ENCODE measurements at regions of chr20 and their contacts with region 1.

Region 1: DNA sequence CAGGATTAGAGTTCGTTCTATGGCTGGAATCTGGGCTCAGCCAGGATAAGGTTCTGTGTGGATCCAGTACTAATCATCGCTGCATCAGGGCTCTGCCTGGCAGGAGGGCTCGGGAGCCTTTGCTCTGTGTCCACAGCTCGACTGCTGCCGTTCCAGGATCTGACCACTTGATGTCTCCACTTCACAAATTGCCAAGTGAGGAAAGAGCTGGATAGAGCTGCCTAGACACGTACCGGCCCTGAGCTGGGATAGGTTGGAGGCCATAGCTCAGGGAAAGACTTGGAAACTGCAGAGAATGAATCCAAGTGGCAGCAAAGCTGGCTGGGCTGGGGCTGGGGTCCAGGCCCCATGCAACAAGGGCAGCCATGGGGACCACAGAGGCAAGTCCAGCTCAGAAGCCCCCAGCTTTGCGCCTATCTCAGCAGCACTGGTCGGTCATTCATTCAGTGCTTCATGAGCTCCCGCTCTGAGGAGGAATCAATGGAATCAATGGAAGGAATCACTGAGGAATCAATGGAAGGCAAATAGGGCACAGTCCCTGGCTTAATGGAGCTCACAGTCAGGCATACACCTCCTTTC is 38.0 kb upstream of the TOP1 start:
- DNase-seq: peak; percentile 91
- H3K4me3 Mint-ChIP-seq: no peak overlapping the region
- H3K27ac Mint-ChIP-seq: peak overlapping the region; percentile 88
- H3K4me1 Mint-ChIP-seq: peaks cover 15% of the 10 kb centered on the region
- H3K27me3 Mint-ChIP-seq: no peaks in the 10 kb centered on the region
- CTCF ChIP-seq: peak; percentile 71

Region 2: DNA sequence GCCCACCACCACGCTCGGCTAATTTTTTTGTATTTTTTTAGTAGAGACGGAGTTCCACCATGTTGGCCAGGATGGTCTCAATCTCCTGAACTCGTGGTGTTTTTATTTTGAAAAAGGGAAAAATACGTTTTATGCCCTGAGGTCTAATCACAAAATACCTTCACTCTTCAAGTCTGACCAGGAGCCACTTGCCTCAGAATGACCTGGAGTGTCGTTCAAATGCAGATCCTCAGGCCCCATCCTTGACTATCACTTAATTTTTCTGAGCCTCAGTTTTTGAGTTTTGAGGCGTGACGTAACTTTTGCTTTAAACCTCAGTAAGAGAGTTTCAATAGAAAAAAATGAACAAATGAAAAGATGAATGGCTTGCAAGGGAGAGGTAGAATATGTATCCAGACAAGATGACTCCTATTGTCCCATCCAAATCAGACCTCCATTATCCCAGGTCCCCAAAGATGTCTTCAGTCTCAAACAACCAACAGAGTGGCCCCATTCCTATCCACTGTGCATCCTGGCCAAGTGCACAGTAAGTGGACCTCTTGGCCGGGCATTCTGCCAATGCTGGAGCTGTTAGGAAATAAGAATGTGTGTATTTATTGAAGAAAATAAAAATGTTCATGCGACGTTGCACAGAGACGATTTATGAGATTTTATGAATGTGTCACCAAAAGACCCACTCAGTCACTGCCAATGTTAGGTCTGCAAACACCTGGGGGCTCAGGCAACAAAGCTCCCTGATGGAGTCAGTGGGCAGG is 497.7 kb before region 1 on chr20:
- CTCF ChIA-PET with region 1: no interaction called
- POLR2A ChIA-PET with region 1: no interaction called
- intact Hi-C with region 1: no loop called
- DNase-seq: peak; percentile 93
- H3K4me3 Mint-ChIP-seq: peak overlapping the region; percentile 47
- H3K27ac Mint-ChIP-seq: peak overlapping the region; percentile 72
- H3K4me1 Mint-ChIP-seq: peaks cover 59% of the 10 kb centered on the region
- H3K27me3 Mint-ChIP-seq: no peaks in the 10 kb centered on the region
- CTCF ChIP-seq: no peak

Region 3: DNA sequence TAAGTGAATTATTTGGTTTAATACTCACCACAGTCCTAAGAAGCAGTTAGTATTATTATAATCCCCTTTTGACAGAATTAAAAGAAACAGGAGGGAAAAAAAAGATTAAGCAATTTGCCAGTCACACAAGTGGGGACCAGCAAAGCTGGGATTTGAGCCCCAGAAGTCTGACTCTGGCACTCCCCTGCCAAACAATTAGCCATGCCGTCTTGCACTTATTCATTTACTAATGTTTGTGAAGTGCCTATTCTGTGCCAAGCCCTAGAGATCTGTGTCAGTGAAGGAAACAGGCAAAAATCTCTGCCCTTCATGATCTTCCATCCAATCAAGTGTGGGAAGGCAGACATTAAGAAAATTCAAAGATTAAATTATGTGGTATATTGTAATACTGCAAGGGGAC is 88.0 kb before region 1 on chr20:
- CTCF ChIA-PET with region 1: no interaction called
- POLR2A ChIA-PET with region 1: no interaction called
- intact Hi-C with region 1: no loop called
- DNase-seq: no peak
- H3K4me3 Mint-ChIP-seq: no peak overlapping the region
- H3K27ac Mint-ChIP-seq: no peak overlapping the region
- H3K4me1 Mint-ChIP-seq: no peaks in the 10 kb centered on the region
- H3K27me3 Mint-ChIP-seq: no peaks in the 10 kb centered on the region
- CTCF ChIP-seq: no peak

Region 4: DNA sequence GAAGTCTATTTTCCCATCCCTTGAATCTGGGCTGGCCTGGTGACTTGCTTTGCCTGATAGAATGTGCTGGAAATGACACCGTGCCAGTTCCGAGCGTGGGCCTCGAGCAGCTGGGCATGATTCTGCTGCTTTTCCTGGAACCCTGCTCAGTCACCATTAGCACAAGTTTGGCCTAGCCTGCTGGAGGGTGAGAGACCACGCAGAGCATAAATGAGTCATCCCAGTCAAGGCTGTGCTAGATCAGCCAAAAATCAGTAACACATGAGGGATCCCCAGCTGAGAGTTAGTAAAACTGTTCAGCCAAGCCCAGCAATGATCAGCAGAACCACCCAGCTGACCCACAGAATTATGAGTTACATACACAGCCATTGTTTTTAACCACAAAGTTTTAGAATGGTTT is 36.8 kb before region 1 on chr20:
- CTCF ChIA-PET with region 1: no interaction called
- POLR2A ChIA-PET with region 1: no interaction called
- intact Hi-C with region 1: no loop called
- DNase-seq: no peak
- H3K4me3 Mint-ChIP-seq: no peak overlapping the region
- H3K27ac Mint-ChIP-seq: no peak overlapping the region
- H3K4me1 Mint-ChIP-seq: no peaks in the 10 kb centered on the region
- H3K27me3 Mint-ChIP-seq: no peaks in the 10 kb centered on the region
- CTCF ChIP-seq: no peak

Region 5: DNA sequence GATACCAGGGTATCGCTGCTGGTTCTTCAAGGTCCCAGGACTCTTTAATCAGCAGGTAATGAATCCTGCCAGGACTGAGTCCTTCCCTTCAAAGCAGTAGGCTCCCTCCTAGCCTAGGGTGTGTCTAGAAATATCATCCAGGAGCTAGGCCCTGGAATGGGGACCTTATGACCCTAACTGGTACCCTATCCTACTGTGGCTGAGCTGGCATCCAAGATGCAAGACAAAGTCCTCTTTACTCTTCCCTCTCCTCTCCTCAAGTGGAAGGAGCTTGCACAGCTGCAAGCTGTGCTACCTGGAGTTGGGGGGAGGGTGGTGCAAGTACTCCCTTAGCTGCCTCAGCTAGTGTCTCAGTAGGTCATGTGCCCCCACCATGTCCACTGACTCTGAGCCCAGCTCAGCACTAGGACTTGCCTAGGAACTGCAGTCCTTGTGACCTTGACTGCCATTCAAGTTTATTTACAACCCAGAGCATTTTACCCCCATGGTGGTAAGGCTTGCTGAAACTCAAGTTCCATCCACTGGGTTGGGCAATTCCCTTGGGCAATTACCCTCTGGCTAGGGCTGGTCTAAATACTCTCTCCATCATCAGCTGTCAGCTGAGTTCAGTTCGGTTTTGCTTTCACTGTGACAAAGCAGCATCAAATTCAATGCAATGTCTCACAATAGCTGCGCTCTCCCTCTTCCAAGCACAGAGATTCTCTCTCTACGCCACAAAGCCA is 10.4 kb before region 1 on chr20:
- CTCF ChIA-PET with region 1: interaction called, 81 read pairs
- POLR2A ChIA-PET with region 1: interaction called, 5 read pairs
- intact Hi-C with region 1: no loop called
- DNase-seq: no peak
- H3K4me3 Mint-ChIP-seq: no peak overlapping the region
- H3K27ac Mint-ChIP-seq: peak overlapping the region; percentile 7
- H3K4me1 Mint-ChIP-seq: peaks cover 16% of the 10 kb centered on the region
- H3K27me3 Mint-ChIP-seq: no peaks in the 10 kb centered on the region
- CTCF ChIP-seq: no peak

Region 6: GRCh38 chr20:41017390-41018042 is 26.9 kb after region 1 on chr20:
- CTCF ChIA-PET with region 1: interaction called, 18 read pairs
- POLR2A ChIA-PET with region 1: interaction called, 3 read pairs
- intact Hi-C with region 1: no loop called
- DNase-seq: no peak
- H3K4me3 Mint-ChIP-seq: no peak overlapping the region
- H3K27ac Mint-ChIP-seq: no peak overlapping the region
- H3K4me1 Mint-ChIP-seq: peaks cover 18% of the 10 kb centered on the region
- H3K27me3 Mint-ChIP-seq: no peaks in the 10 kb centered on the region
- CTCF ChIP-seq: no peak

Region 7: DNA sequence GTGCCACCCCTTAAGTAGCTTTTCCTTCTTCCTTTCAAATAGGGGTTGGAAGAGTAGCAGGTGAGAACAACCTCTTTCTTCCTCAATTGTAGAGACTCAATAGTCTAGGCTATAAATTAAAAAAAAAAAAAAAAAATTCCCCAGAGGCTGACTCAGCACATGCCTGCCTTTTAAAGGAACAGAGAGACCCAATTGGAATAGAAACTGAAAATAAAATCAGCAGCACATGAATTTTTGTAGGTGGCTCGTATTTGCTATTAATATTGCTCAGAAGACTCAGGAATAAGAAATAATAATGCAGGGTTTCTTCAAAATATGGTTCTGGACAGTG is 57.3 kb after region 1 on chr20:
- CTCF ChIA-PET with region 1: interaction called, 88 read pairs
- POLR2A ChIA-PET with region 1: interaction called, 16 read pairs
- intact Hi-C with region 1: loop called (anchors 5 kb)
- DNase-seq: peak; percentile 39
- H3K4me3 Mint-ChIP-seq: peak overlapping the region; percentile 73
- H3K27ac Mint-ChIP-seq: peak overlapping the region; percentile 5
- H3K4me1 Mint-ChIP-seq: peaks cover 66% of the 10 kb centered on the region
- H3K27me3 Mint-ChIP-seq: no peaks in the 10 kb centered on the region
- CTCF ChIP-seq: no peak

Region 8: GRCh38 chr20:41072190-41072863 is 81.7 kb after region 1 on chr20:
- CTCF ChIA-PET with region 1: interaction called, 248 read pairs
- POLR2A ChIA-PET with region 1: interaction called, 4 read pairs
- intact Hi-C with region 1: no loop called
- DNase-seq: peak; percentile 82
- H3K4me3 Mint-ChIP-seq: no peak overlapping the region
- H3K27ac Mint-ChIP-seq: peak overlapping the region; percentile 43
- H3K4me1 Mint-ChIP-seq: peaks cover 27% of the 10 kb centered on the region
- H3K27me3 Mint-ChIP-seq: no peaks in the 10 kb centered on the region
- CTCF ChIP-seq: no peak

Region 9: DNA sequence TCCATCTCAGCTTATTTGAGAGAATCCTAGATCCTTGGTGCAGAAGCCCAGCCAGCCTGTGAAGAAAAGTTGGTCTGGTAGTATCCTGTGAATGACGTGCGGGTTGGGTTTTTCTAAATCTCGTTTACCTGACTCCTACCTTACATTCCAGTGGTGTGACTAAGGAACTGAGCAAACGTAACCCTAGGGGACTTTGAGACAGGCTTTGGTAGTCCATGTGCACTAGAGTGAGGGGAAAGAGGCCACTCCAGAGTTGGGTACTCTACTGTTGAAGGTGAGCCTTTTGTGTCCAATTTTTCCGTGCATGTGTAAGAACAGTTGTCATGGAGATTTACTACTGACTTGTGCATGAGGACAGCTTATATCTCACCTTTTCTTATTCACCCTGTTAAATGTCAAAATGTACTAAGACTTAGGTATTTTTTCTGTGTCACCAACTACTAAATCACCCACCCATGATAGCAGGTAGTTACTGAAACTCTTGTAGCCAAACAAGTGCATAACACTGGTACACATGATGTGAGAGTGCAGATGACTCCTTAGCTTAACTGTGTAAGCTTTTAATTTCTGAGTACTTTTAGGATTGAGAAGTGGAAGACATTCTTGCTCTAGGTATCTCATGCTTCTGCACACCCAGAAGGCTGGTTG is 120.4 kb after region 1 on chr20:
- CTCF ChIA-PET with region 1: interaction called, 15 read pairs
- POLR2A ChIA-PET with region 1: interaction called, 3 read pairs
- intact Hi-C with region 1: no loop called
- DNase-seq: no peak
- H3K4me3 Mint-ChIP-seq: no peak overlapping the region
- H3K27ac Mint-ChIP-seq: no peak overlapping the region
- H3K4me1 Mint-ChIP-seq: peaks cover 5% of the 10 kb centered on the region
- H3K27me3 Mint-ChIP-seq: no peaks in the 10 kb centered on the region
- CTCF ChIP-seq: no peak

Region 10: DNA sequence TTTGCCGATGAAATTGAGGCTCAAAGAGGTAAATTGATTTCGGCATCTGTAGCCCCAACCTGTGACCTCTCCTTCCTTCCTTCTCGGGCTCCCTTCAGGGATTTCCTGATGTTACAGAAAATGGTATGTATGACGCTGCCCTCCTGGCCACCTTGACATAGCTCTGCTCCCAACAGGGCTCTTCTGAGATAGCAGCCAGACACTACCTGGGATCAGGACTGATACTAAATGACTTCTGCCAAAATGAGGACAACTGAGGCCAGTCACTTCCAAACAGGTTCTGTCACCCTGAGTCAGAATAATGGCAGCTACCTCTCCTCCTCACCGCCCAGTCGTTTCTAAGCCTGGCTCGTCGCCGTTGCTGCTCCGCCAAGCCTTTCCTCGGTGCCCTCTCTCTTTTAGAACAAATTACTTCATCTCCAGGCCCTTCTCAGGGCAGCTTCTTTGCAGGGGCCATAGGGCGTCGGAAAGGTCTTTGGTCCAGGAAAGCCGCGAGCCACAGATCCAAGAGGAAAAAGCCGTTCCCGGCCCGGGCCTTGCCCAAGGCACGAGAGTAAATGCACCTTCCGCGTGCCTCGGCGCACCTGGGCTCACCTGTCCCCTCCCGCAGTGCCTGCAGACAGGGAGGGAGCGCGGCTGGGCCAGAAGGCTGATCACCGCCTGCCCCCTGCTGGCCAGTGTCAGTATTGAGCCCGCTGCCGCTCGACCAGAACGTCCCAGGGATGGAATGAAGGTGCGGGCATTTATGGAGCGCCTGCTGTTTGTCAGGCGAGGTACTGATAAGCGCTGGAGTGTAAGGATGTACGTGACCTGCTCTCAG is 349.1 kb after region 1 on chr20:
- CTCF ChIA-PET with region 1: interaction called, 21 read pairs
- POLR2A ChIA-PET with region 1: interaction called, 3 read pairs
- intact Hi-C with region 1: no loop called
- DNase-seq: peak; percentile 89
- H3K4me3 Mint-ChIP-seq: peak overlapping the region; percentile 80
- H3K27ac Mint-ChIP-seq: peak overlapping the region; percentile 96
- H3K4me1 Mint-ChIP-seq: peaks cover 33% of the 10 kb centered on the region
- H3K27me3 Mint-ChIP-seq: no peaks in the 10 kb centered on the region
- CTCF ChIP-seq: peak; percentile 99

Measured in MCF 10A (cell line).